ENCODE measurements at regions of chr9 and their contacts with region 1.

Region 1: DNA sequence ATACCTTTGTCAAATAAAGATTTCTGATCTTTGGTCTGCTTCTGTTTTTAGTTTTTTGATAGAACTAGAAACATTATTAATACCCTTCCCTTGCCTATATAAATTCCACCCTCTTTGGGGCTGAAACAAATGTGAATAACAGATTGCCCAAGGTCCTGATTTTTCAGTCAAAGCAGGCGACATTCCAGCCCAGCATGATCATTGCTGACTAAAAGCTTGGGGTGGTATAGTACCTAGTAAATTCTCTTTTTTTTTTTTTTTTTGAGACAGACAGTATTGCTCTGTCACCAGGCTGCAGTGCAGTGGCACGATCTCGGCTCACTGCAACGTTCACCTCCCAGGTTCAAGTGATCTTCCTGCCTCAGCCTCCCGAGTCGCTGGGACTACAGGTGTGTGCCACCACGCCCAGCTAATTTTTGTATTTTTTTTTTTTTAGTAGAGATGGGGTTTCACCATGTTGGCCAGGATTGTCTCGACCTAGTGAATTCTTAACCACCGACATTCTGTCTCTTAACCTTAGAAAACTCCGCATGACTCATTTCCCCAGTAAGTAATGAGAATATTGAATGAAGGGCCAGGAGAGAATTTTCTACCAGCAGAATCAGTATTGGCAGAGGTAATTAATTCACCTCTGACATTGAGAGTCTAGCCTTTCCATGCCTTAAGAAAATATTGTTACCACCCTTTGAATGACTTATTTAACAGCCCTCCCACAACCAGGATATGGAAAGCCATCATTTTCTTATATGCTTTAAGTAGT is 226.4 kb downstream of the GNA14 start:
- DNase-seq: no peak
- ATAC-seq: no peak

Region 2: DNA sequence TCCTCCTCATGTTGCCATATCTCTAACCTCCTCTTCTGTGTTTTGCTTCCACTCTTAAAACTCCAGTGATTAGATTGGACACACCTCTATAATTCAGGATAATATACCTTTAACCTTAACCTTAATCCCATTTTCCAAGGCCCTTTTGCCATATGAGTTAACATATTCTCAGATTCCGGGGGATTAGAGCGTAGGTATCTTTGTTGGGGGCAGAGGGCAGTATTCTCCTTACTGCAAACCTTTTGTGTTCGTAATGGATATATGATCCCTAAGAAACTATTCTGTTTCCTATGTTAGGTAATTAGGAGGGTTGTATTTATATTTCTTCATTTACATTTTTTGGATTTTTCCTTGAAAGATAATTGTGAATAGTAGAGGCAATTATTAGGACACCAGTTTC is 144.9 kb before region 1 on chr9:
- intact Hi-C with region 1: no loop called
- DNase-seq: no peak
- ATAC-seq: no peak

Region 3: GRCh38 chr9:77456829-77457437 is 35.2 kb after region 1 on chr9:
- intact Hi-C with region 1: loop called (anchors 1 kb)
- DNase-seq: peak; percentile 91
- ATAC-seq: peak; percentile 91

Region 4: GRCh38 chr9:77712533-77713130 is 290.9 kb after region 1 on chr9:
- intact Hi-C with region 1: no loop called
- DNase-seq: no peak
- ATAC-seq: no peak